ENCODE measurements at regions of chr7 and their contacts with region 1.

Region 1: DNA sequence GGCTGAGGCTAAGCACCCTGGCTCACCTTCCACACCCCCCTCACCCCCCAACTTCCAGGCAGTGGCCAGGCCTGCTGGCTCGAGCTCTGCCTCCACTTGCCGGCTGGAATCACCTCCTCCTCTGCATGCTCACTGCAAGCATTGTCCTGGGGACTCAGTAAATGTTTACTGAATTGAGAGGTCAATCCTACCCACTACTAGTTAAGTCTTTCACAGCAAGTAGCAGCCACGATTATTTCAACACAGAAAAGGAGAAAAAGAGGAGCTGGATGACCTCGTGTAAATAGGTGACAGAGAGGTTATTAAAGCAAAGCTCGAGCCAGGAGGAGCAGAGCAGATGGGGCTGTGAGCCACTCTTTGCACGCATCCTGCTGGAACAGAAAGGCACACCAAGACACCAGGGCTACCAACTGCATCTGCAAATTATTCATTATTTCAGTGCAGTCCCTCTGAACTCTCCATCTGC is 32.1 kb downstream of the HIPK2 start:
- DNase-seq: peak; percentile 89
- ATAC-seq: peak; percentile 81
- H3K4me3 ChIP-seq: 0 out of 6 replicates have a peak overlapping the region, but pooled peaks of 1 of the 3 experiments have one; percentile 12
- H3K27ac ChIP-seq: peak overlapping the region; percentile 25
- H3K4me1 ChIP-seq: peaks cover 82% of the 10 kb centered on the region
- H3K27me3 ChIP-seq: no peaks in the 10 kb centered on the region
- CTCF ChIP-seq: peak; percentile 5; the same call in 1 of the 2 replicates
- EP300 ChIP-seq: peak in 1 of 2 experiments; percentile 6; a peak in 1 of 4 replicates
- POLR2A ChIP-seq: no peak
- RAD21 ChIP-seq: no peak

Region 2: DNA sequence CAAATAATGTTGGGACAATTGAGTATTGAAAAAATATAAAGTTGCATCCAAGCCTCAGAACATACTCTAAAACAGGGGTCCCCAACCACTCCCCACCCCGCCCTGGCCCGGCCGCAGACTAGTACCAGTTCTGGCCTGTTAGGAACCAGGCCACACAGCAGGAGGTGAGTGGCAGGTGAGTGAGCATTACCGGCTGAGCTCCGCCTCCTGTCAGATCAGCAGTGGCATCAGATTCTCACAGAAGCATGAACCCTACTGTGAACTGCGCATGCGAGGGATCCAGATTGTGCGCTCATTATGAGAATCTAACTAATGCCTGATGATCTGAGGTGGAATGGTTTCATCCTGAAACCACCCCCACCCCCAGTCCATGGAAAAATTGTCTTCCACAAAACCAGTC is 12.7 kb after region 1 on chr7:
- CTCF ChIA-PET with region 1: no interaction called
- POLR2A ChIA-PET with region 1: interaction called, 5 read pairs
- in situ Hi-C with region 1: no loop called
- intact Hi-C with region 1: loop called (anchors 2 kb)
- DNase-seq: no peak
- ATAC-seq: no peak
- H3K4me3 ChIP-seq: no peak overlapping the region
- H3K27ac ChIP-seq: peak overlapping the region; percentile 21
- H3K4me1 ChIP-seq: peaks cover 61% of the 10 kb centered on the region
- H3K27me3 ChIP-seq: no peaks in the 10 kb centered on the region
- CTCF ChIP-seq: no peak
- EP300 ChIP-seq: no peak
- POLR2A ChIP-seq: no peak
- RAD21 ChIP-seq: no peak

Region 3: DNA sequence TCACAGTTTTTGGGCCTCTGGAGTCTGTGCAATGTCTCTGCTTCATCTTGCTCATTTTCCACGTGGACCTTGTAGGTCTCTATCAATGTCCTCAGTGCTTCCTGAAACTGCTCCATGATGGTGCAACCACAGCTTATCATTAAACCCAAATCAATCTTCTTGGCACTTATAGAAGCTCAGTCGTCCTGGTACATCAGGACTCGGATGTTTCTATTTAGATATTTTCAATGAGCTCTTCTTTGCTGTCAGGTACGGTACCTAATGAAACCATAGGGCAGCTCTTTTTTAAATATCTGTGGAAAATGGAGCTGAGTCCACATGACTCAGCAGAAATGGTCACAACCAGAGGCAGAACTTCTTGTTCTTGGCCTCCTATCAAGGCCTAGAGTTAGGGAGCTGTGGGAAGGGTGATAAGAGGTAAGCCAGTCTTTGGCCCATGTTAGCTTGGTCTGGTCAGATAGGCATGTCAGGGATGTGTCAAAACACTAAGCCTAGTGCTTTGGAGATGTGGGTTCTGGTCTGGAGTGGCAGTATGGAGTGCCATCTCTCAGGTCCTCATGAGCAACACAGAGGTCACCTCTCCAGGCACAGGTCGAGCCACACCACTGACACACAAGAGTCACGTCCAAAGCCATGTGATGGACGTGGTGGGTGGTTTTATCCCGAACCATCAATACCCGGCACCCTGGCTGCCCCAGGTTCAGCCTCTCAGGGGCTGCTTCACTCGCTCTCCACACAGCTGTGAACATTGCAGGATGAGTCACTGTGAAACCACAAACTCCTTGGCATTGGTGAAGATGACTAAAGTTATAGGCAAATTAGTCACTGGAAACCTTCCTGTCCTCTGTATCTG is 170.4 kb after region 1 on chr7:
- CTCF ChIA-PET with region 1: no interaction called
- POLR2A ChIA-PET with region 1: no interaction called
- in situ Hi-C with region 1: no loop called
- intact Hi-C with region 1: no loop called
- DNase-seq: no peak
- ATAC-seq: no peak
- H3K4me3 ChIP-seq: no peak overlapping the region
- H3K27ac ChIP-seq: no peak overlapping the region
- H3K4me1 ChIP-seq: no peaks in the 10 kb centered on the region
- H3K27me3 ChIP-seq: no peaks in the 10 kb centered on the region
- CTCF ChIP-seq: no peak
- EP300 ChIP-seq: no peak
- POLR2A ChIP-seq: no peak
- RAD21 ChIP-seq: no peak

Measured in HepG2 (cell line).